Right lobe of liver (tissue), 6 donors: ENCODE measurements at regions of chr7 and their contacts with region 1.

Region 1: GRCh38 chr7:100132697-100133151 is 6.0 kb downstream of the MBLAC1 start:
- DNase-seq: peak in 2 of 3 donors; percentile 67 to 68
- ATAC-seq: peak; percentile 77 to 83 (median 78)
- H3K4me3 ChIP-seq: no peak overlapping the region
- H3K27ac ChIP-seq: no peak overlapping the region
- H3K4me1 ChIP-seq: peaks cover 0 to 26% (median 0%) of the 10 kb centered on the region in 4 donors
- H3K27me3 ChIP-seq: no peaks in the 10 kb centered on the region
- CTCF ChIP-seq: peak; percentile 84 to 85 (median 84)
- POLR2A ChIP-seq: no peak

Region 2: DNA sequence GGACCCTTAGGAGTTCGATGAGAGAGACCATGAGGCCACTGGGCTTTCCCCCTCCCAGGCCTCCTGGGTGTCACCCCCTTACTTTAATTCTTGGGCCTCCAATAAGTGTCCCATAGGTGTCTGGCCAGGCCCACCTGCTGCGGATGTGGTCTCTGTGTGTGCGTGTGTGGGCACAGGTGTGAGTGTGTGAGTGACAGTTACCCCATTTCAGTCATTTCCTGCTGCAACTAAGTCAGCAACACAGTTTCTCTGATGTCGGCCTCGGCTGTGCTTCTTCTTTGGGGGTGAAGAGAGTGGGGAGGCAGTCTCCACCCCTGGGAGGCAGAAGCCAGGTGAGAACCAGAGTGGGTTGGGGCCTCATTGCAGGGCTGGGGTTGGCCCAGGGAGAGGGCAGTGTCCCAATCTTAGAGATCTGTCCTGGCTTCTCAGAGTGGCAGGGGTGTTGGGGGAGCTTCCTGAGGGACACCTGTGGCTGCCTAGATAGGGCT is 88.6 kb after region 1 on chr7:
- intact Hi-C with region 1: loop called (anchors 10 kb)
- DNase-seq: peak in 1 of 3 donors; percentile 29
- ATAC-seq: peak in 3 of 4 donors; percentile 10 to 26 (median 11)
- H3K4me3 ChIP-seq: no peak overlapping the region
- H3K27ac ChIP-seq: peak overlapping the region in 2 of 3 donors; percentile 43 to 54
- H3K4me1 ChIP-seq: no peaks in the 10 kb centered on the region
- H3K27me3 ChIP-seq: no peaks in the 10 kb centered on the region
- CTCF ChIP-seq: no peak
- POLR2A ChIP-seq: no peak